GM12878 (cell line): ENCODE measurements at regions of chr13 and their contacts with region 1.

Region 1: DNA sequence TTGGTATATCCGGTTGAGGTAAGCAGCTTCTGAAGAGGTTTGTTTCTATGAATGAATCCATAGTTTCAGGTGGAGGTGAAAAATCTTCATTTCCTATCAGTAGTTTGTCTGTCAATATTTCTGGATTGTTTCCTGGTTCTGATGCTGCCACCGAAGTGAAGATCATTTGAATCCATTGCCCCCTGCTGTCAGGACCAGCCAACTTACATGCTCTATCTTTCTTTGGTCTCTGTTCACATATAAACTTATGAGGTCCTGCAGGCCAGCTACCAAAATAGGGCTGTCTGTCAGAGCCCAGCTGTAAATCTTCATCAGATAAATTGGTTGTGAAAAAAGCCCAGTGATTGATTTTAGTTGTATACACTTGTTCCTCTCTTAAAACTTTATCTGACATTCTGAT is 15.2 kb upstream of the N4BP2L1 start:
- DNase-seq: peak; percentile 60
- ATAC-seq: peak; percentile 93
- H3K4me3 ChIP-seq: no peak overlapping the region
- H3K27ac ChIP-seq: peak overlapping the region; percentile 62
- H3K4me1 ChIP-seq: peaks cover 15% of the 10 kb centered on the region
- H3K27me3 ChIP-seq: no peaks in the 10 kb centered on the region
- CTCF ChIP-seq: peak; percentile 55 to 62 (median 57); a peak in 5 of 6 replicates
- EP300 ChIP-seq: no peak
- POLR2A ChIP-seq: no peak
- RAD21 ChIP-seq: peak; percentile 67

Region 2: GRCh38 chr13:32246468-32246867 is 196.6 kb before region 1 on chr13:
- CTCF ChIA-PET with region 1: interaction called, 7 read pairs
- POLR2A ChIA-PET with region 1: no interaction called
- RAD21 ChIA-PET with region 1: interaction called, 3 read pairs
- SMC1A ChIA-PET with region 1: interaction called, 5 read pairs
- in situ Hi-C with region 1: no loop called
- intact Hi-C with region 1: loop called (anchors 5 kb)
- DNase-seq: no peak
- ATAC-seq: peak; percentile 98
- H3K4me3 ChIP-seq: no peak overlapping the region
- H3K27ac ChIP-seq: no peak overlapping the region
- H3K4me1 ChIP-seq: peaks cover 9% of the 10 kb centered on the region
- H3K27me3 ChIP-seq: no peaks in the 10 kb centered on the region
- CTCF ChIP-seq: peak; percentile 68 to 81 (median 73)
- EP300 ChIP-seq: no peak
- POLR2A ChIP-seq: no peak
- RAD21 ChIP-seq: peak; percentile 55

Region 3: DNA sequence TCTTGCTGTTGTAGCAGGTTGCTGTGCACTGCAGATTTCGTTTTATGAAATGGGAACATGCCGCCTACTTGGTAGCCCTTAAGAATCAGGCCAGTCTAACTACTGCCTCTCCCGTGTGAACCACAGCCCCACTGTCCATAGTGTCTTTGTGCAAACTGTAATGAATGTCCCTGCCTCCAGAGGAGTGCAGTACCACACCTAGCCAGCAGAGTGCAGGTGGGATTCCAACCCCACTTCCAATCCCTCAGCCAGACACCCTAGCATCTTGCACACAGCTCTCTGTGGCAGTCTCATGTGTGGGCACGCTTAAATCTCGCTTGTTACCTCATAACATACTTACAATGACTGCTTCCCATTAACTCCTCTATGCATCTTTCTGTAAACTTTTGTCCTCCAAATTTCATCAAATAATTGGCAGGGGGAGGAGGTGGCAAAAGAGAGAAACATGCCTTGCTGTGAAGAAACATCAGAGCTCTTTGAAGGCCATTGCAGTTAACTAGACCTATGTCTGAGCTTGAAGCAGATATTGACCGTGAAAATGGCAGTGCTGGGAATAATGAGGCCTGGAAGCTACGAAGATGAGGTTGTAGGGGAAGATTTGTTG is 175.2 kb before region 1 on chr13:
- CTCF ChIA-PET with region 1: interaction called, 18 read pairs
- POLR2A ChIA-PET with region 1: no interaction called
- RAD21 ChIA-PET with region 1: interaction called, 8 read pairs
- SMC1A ChIA-PET with region 1: interaction called, 9 read pairs
- in situ Hi-C with region 1: no loop called
- intact Hi-C with region 1: loop called (anchors 5 kb)
- DNase-seq: no peak
- ATAC-seq: peak; percentile 100
- H3K4me3 ChIP-seq: no peak overlapping the region
- H3K27ac ChIP-seq: no peak overlapping the region
- H3K4me1 ChIP-seq: no peaks in the 10 kb centered on the region
- H3K27me3 ChIP-seq: no peaks in the 10 kb centered on the region
- CTCF ChIP-seq: peak; percentile 81 to 95 (median 92)
- EP300 ChIP-seq: no peak
- POLR2A ChIP-seq: no peak
- RAD21 ChIP-seq: peak; percentile 58

Region 4: DNA sequence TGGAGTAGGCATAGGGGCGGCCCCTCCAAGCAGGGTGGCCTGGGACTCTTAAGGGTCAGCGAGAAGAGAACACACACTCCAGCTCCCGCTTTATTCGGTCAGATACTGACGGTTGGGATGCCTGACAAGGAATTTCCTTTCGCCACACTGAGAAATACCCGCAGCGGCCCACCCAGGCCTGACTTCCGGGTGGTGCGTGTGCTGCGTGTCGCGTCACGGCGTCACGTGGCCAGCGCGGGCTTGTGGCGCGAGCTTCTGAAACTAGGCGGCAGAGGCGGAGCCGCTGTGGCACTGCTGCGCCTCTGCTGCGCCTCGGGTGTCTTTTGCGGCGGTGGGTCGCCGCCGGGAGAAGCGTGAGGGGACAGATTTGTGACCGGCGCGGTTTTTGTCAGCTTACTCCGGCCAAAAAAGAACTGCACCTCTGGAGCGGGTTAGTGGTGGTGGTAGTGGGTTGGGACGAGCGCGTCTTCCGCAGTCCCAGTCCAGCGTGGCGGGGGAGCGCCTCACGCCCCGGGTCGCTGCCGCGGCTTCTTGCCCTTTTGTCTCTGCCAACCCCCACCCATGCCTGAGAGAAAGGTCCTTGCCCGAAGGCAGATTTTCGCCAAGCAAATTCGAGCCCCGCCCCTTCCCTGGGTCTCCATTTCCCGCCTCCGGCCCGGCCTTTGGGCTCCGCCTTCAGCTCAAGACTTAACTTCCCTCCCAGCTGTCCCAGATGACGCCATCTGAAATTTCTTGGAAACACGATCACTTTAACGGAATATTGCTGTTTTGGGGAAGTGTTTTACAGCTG is 127.7 kb before region 1 on chr13 and contains the starts of genes BRCA2 and ZAR1L:
- CTCF ChIA-PET with region 1: interaction called, 3 read pairs
- POLR2A ChIA-PET with region 1: interaction called, 3 read pairs
- RAD21 ChIA-PET with region 1: interaction called, 4 read pairs
- SMC1A ChIA-PET with region 1: interaction called, 9 read pairs
- in situ Hi-C with region 1: no loop called
- intact Hi-C with region 1: loop called (anchors 2 kb)
- DNase-seq: peak; percentile 68
- ATAC-seq: peak; percentile 93
- H3K4me3 ChIP-seq: peak within 1 kb of the TSS; percentile 78
- H3K27ac ChIP-seq: peak within 1 kb of the TSS; percentile 97
- H3K4me1 ChIP-seq: peaks cover 20% of the 10 kb centered on the region
- H3K27me3 ChIP-seq: no peaks in the 10 kb centered on the region
- CTCF ChIP-seq: no peak
- EP300 ChIP-seq: no peak; a peak in 1 of 4 replicates
- POLR2A ChIP-seq: peak; percentile 91
- RAD21 ChIP-seq: no peak
- polyA plus RNA-seq, gene BRCA2: 7.6 to 15.8 TPM
- polyA plus RNA-seq, gene ZAR1L: not detected

Region 5: GRCh38 chr13:32427852-32428580 is 15.1 kb before region 1 on chr13 and contains the start of gene N4BP2L1:
- CTCF ChIA-PET with region 1: interaction called, 22 read pairs
- POLR2A ChIA-PET with region 1: interaction called, 16 read pairs
- RAD21 ChIA-PET with region 1: interaction called, 6 read pairs
- SMC1A ChIA-PET with region 1: interaction called, 25 read pairs
- in situ Hi-C with region 1: no loop called
- intact Hi-C with region 1: no loop called
- DNase-seq: peak; percentile 87
- ATAC-seq: peak; percentile 85
- H3K4me3 ChIP-seq: peak within 1 kb of the TSS; percentile 94
- H3K27ac ChIP-seq: peak within 1 kb of the TSS; percentile 98
- H3K4me1 ChIP-seq: peaks cover 17% of the 10 kb centered on the region
- H3K27me3 ChIP-seq: no peaks in the 10 kb centered on the region
- CTCF ChIP-seq: no peak
- EP300 ChIP-seq: peak in 1 of 2 experiments; percentile 36; a peak in 1 of 4 replicates
- POLR2A ChIP-seq: peak; percentile 91
- RAD21 ChIP-seq: no peak
- polyA plus RNA-seq, gene N4BP2L1: 3.3 to 5.7 TPM